ENCODE measurements at regions of chr17 and their contacts with region 1.

Region 1: DNA sequence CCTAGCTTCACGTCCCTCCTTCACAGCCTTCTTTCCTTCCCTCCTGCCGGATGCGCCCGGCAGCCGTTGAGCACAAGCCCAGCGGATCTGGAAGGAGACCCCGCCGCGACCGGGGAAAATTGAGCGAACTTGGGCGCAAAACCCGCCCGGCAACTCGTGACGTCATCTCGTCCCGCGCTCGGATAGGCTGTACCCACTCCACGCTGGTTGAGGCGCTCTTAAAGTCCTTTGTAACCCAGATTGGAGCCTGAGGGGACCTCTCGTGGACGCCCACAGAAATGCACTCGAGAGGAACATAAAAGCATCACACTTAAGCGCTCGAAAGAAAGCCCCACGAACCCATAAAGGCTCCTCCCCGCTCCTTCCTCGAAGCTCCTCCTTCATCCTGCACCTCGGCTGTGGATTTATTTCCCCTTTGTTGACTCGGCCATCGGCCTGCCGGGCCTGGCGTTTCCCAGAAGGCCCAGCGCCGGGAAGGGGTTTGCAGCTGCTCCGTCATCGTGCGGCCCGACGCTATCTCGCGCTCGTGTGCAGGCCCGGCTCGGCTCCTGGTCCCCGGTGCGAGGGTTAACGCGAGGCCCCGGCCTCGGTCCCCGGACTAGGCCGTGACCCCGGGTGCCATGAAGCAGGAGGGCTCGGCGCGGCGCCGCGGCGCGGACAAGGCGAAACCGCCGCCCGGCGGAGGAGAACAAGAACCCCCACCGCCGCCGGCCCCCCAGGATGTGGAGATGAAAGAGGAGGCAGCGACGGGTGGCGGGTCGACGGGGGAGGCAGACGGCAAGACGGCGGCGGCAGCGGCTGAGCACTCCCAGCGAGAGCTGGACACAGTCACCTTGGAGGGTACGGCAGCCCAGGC is at the start of gene PSMD3:
- DNase-seq: peak; percentile 98 to 100
- H3K4me3 ChIP-seq: peak within 1 kb of the TSS; percentile 88 to 99
- H3K27ac ChIP-seq: peak within 1 kb of the TSS; percentile 85 to 93
- H3K4me1 ChIP-seq: peaks cover 9 to 15% of the 10 kb centered on the region in 2 donors
- H3K27me3 ChIP-seq: no peaks in the 10 kb centered on the region
- CTCF ChIP-seq: peak; percentile 75 to 94 (median 81)
- total RNA-seq, gene PSMD3: 93.1 TPM

Region 2: GRCh38 chr17:39872751-39873150 is 107.8 kb before region 1 on chr17:
- intact Hi-C with region 1: loop called (anchors 1 kb)
- DNase-seq: no peak
- H3K4me3 ChIP-seq: no peak overlapping the region
- H3K27ac ChIP-seq: no peak overlapping the region
- H3K4me1 ChIP-seq: no peaks in the 10 kb centered on the region
- H3K27me3 ChIP-seq: peaks cover 3% of the 10 kb centered on the region
- CTCF ChIP-seq: peak in 1 of 3 experiments; percentile 28

Region 3: GRCh38 chr17:39939588-39940419 is 40.8 kb before region 1 on chr17:
- intact Hi-C with region 1: no loop called
- DNase-seq: no peak
- H3K4me3 ChIP-seq: no peak overlapping the region
- H3K27ac ChIP-seq: no peak overlapping the region
- H3K4me1 ChIP-seq: no peaks in the 10 kb centered on the region
- H3K27me3 ChIP-seq: no peaks in the 10 kb centered on the region
- CTCF ChIP-seq: no peak

Region 4: DNA sequence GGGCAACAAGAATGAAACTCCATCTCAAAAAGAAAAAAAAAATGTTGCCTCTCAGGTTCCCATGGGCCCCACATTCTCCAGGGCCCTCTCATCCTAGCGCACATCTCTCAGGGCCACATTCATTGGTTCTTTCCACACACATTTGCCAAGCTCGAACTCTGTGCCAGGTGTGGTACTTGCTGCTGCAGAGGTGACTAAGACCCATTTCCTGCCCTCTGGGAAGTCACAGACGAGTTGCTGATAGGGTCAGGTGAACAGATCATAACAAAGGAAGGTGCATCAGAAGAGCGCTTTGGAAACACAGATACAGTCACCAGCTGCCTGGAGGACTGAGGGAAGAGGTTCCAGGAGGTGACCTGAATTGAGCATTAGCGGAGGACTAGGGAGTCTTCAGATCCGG is 16.8 kb before region 1 on chr17:
- intact Hi-C with region 1: loop called (anchors 1 kb)
- DNase-seq: no peak
- H3K4me3 ChIP-seq: no peak overlapping the region
- H3K27ac ChIP-seq: no peak overlapping the region
- H3K4me1 ChIP-seq: no peaks in the 10 kb centered on the region
- H3K27me3 ChIP-seq: no peaks in the 10 kb centered on the region
- CTCF ChIP-seq: no peak